Heart left ventricle (tissue), 16 donors: ENCODE measurements at regions of chr2 and their contacts with region 1.

Region 1: DNA sequence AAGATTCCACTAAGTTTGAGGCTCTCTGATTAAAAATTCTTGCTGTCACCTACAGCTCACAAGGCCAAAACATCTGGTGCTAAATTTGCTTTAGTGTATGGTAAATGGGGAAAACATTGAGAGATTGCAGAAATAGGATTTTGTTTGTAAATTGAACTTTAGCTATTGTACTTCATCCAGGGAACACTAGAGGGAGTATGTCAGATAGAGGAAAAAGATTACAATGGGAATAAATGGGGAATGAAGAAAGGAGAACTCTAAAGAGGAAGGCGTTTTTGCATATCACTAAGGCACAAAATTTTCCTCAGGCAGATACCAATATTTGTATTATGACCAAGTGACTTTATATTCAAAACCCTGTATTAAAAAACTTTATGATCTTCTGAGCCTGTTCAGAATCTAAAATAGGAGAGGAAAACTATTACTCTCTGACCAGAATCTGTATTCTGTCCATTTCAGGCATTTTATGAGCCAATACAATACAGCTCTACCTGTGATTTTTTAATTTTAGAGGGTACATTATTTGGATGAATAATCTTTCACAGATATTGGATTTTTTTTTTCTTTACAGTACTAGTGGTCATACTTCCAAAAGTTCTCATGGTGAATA is 52.3 kb upstream of the ITGB6 start:
- DNase-seq: no peak
- ATAC-seq: peak in 2 of 4 donors; percentile 43 to 56
- H3K4me3 ChIP-seq: no peak overlapping the region
- H3K27ac ChIP-seq: peak overlapping the region in 11 of 12 donors; percentile 21 to 81 (median 63)
- H3K4me1 ChIP-seq: peaks cover 0 to 29% (median 8%) of the 10 kb centered on the region in 12 donors
- H3K27me3 ChIP-seq: no peaks in the 10 kb centered on the region
- CTCF ChIP-seq: peak; percentile 70 to 87 (median 76)
- POLR2A ChIP-seq: no peak

Region 2: GRCh38 chr2:160109936-160110673 is 142.3 kb before region 1 on chr2:
- intact Hi-C with region 1: loop called in 3 of 10 experiments (anchors 5 to 10 kb)
- DNase-seq: peak; percentile 55 to 71 (median 62)
- ATAC-seq: peak; percentile 73 to 94 (median 86)
- H3K4me3 ChIP-seq: no peak overlapping the region
- H3K27ac ChIP-seq: no peak overlapping the region
- H3K4me1 ChIP-seq: no peaks in the 10 kb centered on the region
- H3K27me3 ChIP-seq: no peaks in the 10 kb centered on the region
- CTCF ChIP-seq: peak; percentile 54 to 90 (median 80)
- POLR2A ChIP-seq: no peak

Region 3: GRCh38 chr2:160221749-160222148 is 30.6 kb before region 1 on chr2:
- intact Hi-C with region 1: loop called in 1 of 10 experiments (anchors 2 kb)
- DNase-seq: peak; percentile 50 to 85 (median 73)
- ATAC-seq: peak; percentile 93 to 98 (median 97)
- H3K4me3 ChIP-seq: no peak overlapping the region
- H3K27ac ChIP-seq: peak overlapping the region; percentile 60 to 91 (median 76)
- H3K4me1 ChIP-seq: peaks cover 0 to 35% (median 17%) of the 10 kb centered on the region in 12 donors
- H3K27me3 ChIP-seq: no peaks in the 10 kb centered on the region
- CTCF ChIP-seq: no peak
- POLR2A ChIP-seq: no peak

Region 4: DNA sequence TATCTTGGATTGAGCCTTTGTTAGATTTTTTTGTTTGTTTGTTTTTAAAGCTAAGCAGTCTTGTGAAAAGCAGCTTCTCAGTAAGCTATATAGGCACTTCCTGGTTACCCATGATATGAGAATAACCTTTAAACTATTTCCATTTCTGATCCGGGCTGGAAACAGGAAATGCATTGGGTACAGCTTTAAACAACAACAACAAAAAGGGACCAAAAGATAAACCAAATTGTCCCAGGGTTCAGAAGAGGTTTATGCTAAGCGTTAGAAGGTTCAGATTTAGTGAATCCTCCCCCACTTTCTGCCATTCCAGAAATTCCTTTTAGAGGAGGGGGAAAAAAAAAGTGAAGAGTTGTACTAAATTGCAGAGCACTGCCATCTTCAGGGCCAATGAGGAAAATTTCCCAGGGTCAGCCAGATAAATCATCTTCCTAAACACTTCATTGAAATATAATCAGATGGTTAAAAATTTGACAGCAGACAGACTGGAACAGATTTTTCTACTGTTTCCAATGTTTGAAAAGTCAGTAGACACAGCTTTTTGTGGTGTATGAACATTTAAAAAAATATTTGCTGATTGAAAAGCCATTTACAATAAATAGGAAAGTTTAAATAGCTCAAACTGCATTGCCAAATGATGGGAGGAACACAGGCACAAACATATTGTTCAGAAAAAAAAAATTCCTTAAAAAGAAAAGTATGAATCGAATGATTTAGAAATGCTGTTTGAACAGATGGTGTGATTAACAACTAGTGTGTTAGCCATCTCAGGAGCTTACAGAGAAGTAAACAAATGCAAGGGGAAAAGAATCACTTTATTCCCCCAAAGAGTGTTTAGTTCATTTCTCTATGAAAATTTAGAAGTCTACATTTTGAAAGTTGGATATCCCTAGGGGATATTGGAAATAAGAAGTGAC is 717.9 kb after region 1 on chr2:
- intact Hi-C with region 1: loop called in 1 of 10 experiments (anchors 5 kb)
- DNase-seq: peak in 2 of 5 donors; percentile 29 to 30
- ATAC-seq: peak in 3 of 4 donors; percentile 58 to 75 (median 69)
- H3K4me3 ChIP-seq: peak overlapping the region in 9 of 12 donors; percentile 17 to 38 (median 29)
- H3K27ac ChIP-seq: peak overlapping the region in 11 of 12 donors; percentile 22 to 76 (median 63)
- H3K4me1 ChIP-seq: peaks cover 0 to 23% (median 10%) of the 10 kb centered on the region in 12 donors
- H3K27me3 ChIP-seq: no peaks in the 10 kb centered on the region
- CTCF ChIP-seq: peak; percentile 63 to 87 (median 80)
- POLR2A ChIP-seq: no peak

Region 5: GRCh38 chr2:160984426-160985077 is 732.2 kb after region 1 on chr2:
- intact Hi-C with region 1: loop called in 1 of 10 experiments (anchors 10 kb)
- DNase-seq: peak in 4 of 5 donors; percentile 55 to 76 (median 62)
- ATAC-seq: peak; percentile 89 to 96 (median 94)
- H3K4me3 ChIP-seq: no peak overlapping the region
- H3K27ac ChIP-seq: peak overlapping the region; percentile 18 to 79 (median 69)
- H3K4me1 ChIP-seq: peaks cover 0 to 25% (median 5%) of the 10 kb centered on the region in 12 donors
- H3K27me3 ChIP-seq: no peaks in the 10 kb centered on the region
- CTCF ChIP-seq: no peak
- POLR2A ChIP-seq: no peak

Region 6: DNA sequence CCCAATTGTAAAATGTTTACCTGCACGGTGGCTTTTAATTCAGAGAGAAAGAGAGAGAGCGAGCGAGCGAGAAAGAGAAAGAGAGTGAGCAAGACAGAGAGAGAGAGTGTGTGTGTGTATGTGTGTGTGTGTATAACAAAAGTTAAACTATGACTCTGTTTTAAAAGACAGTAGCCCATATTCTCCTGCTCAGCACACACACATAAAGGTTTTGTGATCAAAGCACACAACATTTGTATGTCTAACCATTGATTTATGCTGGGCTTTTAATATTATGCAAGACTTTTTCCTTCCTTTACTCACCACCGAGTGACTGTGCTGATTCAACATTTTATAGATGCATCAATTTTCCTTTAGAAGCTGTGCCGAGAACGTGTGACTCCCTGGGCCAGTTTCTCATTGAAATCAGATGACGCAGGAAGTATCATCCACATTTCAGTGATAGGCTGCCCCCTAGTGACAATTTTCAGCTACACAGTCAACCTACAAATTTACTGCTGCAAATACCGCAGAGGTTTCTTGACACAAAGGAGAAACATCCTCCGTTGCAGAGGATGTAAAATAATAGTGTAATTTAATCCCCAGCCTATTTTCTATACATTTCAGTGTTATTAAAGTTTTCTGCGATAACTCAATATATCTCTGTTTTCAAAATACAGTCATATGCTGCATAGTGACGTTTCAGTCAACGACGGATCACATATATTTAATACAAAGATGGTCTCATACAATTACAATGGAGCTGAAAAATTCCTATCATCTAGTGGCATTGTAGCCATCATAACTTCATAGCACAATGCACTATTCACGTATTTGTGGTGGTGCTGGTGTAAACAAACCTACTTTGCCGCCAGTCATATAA is 742.0 kb after region 1 on chr2:
- intact Hi-C with region 1: loop called in 6 of 10 experiments (anchors 5 to 10 kb)
- DNase-seq: peak in 4 of 5 donors; percentile 60 to 75 (median 66)
- ATAC-seq: peak; percentile 82 to 90 (median 88)
- H3K4me3 ChIP-seq: peak overlapping the region in 3 of 12 donors; percentile 1 to 22 (median 19)
- H3K27ac ChIP-seq: peak overlapping the region in 9 of 12 donors; percentile 20 to 75 (median 57)
- H3K4me1 ChIP-seq: peaks cover 0 to 16% (median 6%) of the 10 kb centered on the region in 12 donors
- H3K27me3 ChIP-seq: no peaks in the 10 kb centered on the region
- CTCF ChIP-seq: peak; percentile 78 to 93 (median 83)
- POLR2A ChIP-seq: no peak

Region 7: GRCh38 chr2:161063157-161063954 is 811.0 kb after region 1 on chr2:
- intact Hi-C with region 1: loop called in 1 of 10 experiments (anchors 5 kb)
- DNase-seq: peak in 4 of 5 donors; percentile 59 to 69 (median 66)
- ATAC-seq: peak in 3 of 4 donors; percentile 80 to 84 (median 82)
- H3K4me3 ChIP-seq: peak overlapping the region in 3 of 12 donors; percentile 2 to 20 (median 2)
- H3K27ac ChIP-seq: no peak overlapping the region
- H3K4me1 ChIP-seq: peaks cover 0 to 9% (median 0%) of the 10 kb centered on the region in 12 donors
- H3K27me3 ChIP-seq: no peaks in the 10 kb centered on the region
- CTCF ChIP-seq: peak; percentile 74 to 94 (median 86)
- POLR2A ChIP-seq: no peak